Motor neuron (in vitro differentiated cells): ENCODE measurements at regions of chr3 and their contacts with region 1.

Region 1: DNA sequence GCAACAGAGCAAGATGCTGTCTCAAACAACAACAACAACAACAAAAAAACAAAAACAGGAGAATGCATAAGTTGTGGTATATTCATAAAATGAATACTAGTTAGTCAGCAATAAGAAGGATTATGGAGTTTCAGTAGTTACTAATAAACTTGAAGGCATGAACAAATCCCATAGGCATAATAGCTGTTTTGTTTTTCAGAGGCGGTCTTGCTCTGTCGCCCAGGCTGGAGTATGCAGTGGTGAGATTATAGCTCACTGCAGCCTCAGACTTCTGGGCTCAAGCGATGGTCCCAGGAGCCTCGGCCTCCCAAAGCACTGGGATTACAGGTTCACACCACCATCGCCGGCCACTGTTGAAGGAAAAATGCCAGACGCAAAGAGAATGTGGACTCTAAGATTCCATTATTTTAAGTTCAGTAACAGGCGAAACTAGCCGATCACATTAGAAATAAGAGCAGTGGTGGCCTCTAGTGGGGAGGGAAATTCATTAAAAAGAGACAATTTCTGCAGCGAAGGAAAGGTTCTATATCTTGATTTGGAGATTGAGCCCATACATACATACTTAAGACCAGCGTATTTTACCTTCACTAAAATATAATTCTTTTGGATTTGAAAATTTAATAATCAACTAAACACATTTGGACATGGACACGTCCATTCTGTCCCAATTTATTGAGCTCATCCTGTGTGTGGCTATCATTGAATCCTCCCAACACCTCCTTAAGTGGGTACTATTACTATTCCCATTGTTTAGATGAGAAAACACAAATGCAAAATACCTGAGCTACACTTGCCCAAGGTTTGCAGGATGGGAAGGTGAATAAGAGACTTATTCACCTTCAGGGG is 27.4 kb upstream of the HDAC11 start:
- ATAC-seq: peak in 2 of 8 experiments; percentile 2 to 11
- H3K4me3 ChIP-seq: no peak overlapping the region
- H3K27ac ChIP-seq: peak overlapping the region in 1 of 2 donors; percentile 13
- H3K4me1 ChIP-seq: peaks cover 16 to 17% of the 10 kb centered on the region in 2 donors

Region 2: GRCh38 chr3:13012228-13012691 is 440.5 kb before region 1 on chr3:
- in situ Hi-C with region 1: no loop called
- ATAC-seq: no peak
- H3K4me3 ChIP-seq: no peak overlapping the region
- H3K27ac ChIP-seq: no peak overlapping the region
- H3K4me1 ChIP-seq: peaks cover 30 to 31% of the 10 kb centered on the region in 2 donors

Region 3: GRCh38 chr3:13091898-13092611 is 360.7 kb before region 1 on chr3:
- in situ Hi-C with region 1: loop called in 5 of 9 experiments (anchors 25 kb)
- ATAC-seq: peak; percentile 6 to 72 (median 38)
- H3K4me3 ChIP-seq: no peak overlapping the region
- H3K27ac ChIP-seq: no peak overlapping the region
- H3K4me1 ChIP-seq: peaks cover 32 to 36% of the 10 kb centered on the region in 2 donors

Region 4: DNA sequence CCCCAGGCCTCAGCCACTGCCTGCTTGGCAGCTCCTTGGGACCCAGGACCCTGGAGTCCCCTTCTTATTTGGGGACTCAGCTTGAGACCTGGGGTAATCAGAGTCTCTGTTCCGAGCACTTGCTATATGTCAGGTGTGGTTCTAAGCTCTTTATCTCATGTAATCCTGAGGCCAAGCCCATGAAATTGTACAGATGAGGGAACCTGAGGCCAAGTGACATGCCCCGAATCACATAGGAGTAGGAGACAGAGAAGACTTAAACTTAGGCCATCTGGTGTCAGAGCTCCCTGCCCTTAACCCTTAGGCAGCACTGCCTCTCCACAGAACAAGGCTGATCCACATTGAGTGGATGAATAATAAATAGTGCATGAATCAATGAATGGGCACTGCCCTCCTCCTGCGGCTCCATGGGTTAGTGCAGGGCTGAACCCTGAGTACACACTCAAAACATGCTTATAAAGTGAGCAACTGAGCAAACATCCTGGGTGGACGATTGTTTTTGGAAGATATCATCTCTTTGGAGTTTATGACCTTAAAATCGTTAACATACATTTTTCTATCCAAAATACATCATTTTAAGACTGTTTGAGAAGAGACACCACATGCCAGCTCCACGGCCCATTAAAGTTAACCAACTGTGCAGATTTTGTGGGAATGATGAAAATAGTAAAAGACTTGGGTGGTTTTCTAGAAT is 346.3 kb before region 1 on chr3:
- in situ Hi-C with region 1: loop called in 1 of 9 experiments (anchors 10 kb)
- ATAC-seq: peak in 3 of 8 experiments; percentile 81 to 93 (median 87)
- H3K4me3 ChIP-seq: no peak overlapping the region
- H3K27ac ChIP-seq: no peak overlapping the region
- H3K4me1 ChIP-seq: peaks cover 27 to 36% of the 10 kb centered on the region in 2 donors

Region 5: DNA sequence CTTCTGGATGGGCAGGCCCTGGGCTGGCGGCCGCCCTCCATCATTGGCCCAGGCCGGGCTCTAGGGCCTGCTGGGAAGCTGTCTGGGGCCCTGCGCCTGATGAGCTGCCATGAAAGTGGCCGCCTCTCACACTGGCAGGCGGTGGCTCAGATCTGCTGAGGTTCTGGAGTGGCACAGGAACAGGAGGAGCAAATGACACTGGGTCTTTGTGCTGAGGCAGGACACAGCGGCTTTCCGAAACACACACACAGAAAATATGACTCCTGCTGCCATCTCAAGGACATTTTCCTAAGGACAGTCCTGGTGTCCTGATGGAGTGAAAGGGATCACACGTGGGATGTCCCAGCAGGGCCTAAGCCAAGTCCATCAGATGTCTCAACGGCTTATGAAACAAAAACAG is 136.1 kb before region 1 on chr3:
- in situ Hi-C with region 1: loop called in 1 of 9 experiments (anchors 10 kb)
- ATAC-seq: no peak
- H3K4me3 ChIP-seq: no peak overlapping the region
- H3K27ac ChIP-seq: no peak overlapping the region
- H3K4me1 ChIP-seq: no peaks in the 10 kb centered on the region